GM12878 (cell line): ENCODE measurements at regions of chr2 and their contacts with region 1.

Region 1: DNA sequence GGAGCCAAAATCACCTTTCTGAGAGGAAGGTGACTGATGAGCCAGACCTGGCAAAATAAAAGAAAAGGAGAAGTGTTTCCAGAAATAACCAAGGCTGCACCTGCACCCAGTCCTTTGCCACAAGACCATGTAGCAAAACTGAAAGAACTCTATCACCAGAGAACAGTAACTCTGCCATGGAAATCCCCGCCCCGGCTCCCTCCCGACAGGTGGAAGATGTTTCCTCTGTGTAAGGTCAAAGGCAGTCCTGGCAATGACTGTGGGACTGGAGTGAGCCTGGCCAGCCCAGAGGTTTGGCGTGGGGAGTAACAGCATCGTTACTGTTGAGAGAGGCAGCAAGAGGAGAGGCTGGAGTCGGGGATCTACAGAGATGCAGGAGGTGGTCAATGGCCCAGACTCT is 42.3 kb downstream of the SPRED2 start:
- DNase-seq: peak; percentile 71
- ATAC-seq: peak; percentile 73
- H3K4me3 ChIP-seq: 0 out of 2 replicates have a peak overlapping the region, but pooled peaks have one; percentile 22
- H3K27ac ChIP-seq: peak overlapping the region; percentile 78
- H3K4me1 ChIP-seq: peaks cover 74% of the 10 kb centered on the region
- H3K27me3 ChIP-seq: no peaks in the 10 kb centered on the region
- CTCF ChIP-seq: no peak
- EP300 ChIP-seq: peak; percentile 62 to 85; a peak in 3 of 4 replicates
- POLR2A ChIP-seq: peak; percentile 56
- RAD21 ChIP-seq: no peak

Region 2: GRCh38 chr2:64932371-64933216 is 457.5 kb before region 1 on chr2:
- CTCF ChIA-PET with region 1: no interaction called
- POLR2A ChIA-PET with region 1: no interaction called
- RAD21 ChIA-PET with region 1: no interaction called
- SMC1A ChIA-PET with region 1: no interaction called
- in situ Hi-C with region 1: no loop called
- intact Hi-C with region 1: loop called (anchors 10 kb)
- DNase-seq: peak; percentile 98
- ATAC-seq: peak; percentile 81
- H3K4me3 ChIP-seq: peak overlapping the region; percentile 96
- H3K27ac ChIP-seq: peak overlapping the region; percentile 95
- H3K4me1 ChIP-seq: peaks cover 28% of the 10 kb centered on the region
- H3K27me3 ChIP-seq: no peaks in the 10 kb centered on the region
- CTCF ChIP-seq: no peak
- EP300 ChIP-seq: peak; percentile 62 to 83; a peak in 3 of 4 replicates
- POLR2A ChIP-seq: peak; percentile 84
- RAD21 ChIP-seq: 0 out of 2 replicates have a peak, but pooled peaks have one; percentile 1

Region 3: DNA sequence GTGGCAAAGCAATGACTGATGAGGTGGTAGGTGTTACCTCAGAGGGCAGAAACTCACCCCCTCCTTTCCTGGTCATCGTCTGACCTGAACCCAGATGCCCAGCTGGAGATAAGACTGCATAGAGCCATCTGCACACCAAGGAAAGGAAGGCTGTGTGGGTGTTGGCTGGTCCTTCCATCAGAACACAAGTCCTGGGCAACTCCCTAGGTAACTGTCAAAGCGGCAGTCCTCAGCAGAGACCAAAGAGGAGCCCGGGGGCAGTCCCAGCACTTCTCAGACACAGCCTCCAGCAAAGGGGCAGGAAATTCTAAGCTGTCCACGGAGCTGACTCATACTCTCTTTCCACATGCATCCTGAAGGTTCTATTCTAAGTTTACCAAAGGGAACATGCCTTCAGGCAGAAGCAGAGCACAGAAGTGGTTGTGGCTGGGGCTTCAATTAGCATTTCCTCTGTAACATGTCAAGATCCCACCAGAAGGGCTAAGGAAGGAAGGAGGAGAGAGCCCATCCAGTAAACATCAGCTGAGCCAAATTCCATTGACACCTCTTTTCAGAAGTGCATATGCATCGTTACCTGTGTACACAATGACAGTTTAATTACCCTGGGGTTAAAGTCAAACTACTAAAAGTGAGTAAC is 12.5 kb before region 1 on chr2:
- CTCF ChIA-PET with region 1: interaction called, 18 read pairs
- POLR2A ChIA-PET with region 1: interaction called, 8 read pairs
- RAD21 ChIA-PET with region 1: interaction called, 13 read pairs
- SMC1A ChIA-PET with region 1: interaction called, 80 read pairs
- in situ Hi-C with region 1: no loop called
- intact Hi-C with region 1: no loop called
- DNase-seq: no peak
- ATAC-seq: peak; percentile 64
- H3K4me3 ChIP-seq: no peak overlapping the region
- H3K27ac ChIP-seq: no peak overlapping the region
- H3K4me1 ChIP-seq: peaks cover 29% of the 10 kb centered on the region
- H3K27me3 ChIP-seq: no peaks in the 10 kb centered on the region
- CTCF ChIP-seq: no peak
- EP300 ChIP-seq: no peak
- POLR2A ChIP-seq: no peak
- RAD21 ChIP-seq: no peak

Region 4: DNA sequence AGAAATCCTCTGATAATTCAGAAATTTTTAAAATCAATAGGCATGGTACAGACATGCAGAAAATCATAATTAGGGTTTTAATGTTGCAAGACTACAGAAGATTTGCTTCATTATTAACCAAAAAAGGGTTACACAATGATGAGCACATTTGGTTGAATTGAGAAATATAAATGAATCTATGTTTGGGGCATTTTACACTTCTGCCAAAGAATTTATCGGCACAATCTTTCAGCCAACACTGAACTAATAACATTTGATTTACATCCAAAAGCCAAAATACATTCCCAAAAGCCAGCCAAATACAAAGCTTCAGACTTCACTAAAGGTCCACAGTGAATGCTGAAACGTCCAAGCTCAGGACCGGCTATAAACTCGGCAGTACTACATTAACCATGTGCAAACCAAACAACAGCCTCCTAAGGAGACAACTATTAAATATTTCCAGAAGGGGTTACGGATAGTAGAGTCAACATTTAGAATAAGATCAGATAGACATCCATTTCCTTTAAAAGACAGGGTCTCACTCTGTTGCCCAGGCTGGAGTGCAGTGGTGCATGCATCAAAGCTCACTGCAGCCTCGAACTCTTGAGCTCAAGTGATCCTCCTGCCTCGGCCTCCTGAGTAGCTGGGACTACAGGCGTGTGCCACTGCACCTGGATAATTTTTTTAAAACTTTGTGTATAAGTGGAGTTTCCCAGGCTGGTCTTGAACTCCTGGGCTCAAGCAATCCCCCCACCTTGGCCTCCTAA is 12.8 kb after region 1 on chr2:
- CTCF ChIA-PET with region 1: interaction called, 5 read pairs
- POLR2A ChIA-PET with region 1: interaction called, 10 read pairs
- RAD21 ChIA-PET with region 1: interaction called, 11 read pairs
- SMC1A ChIA-PET with region 1: interaction called, 41 read pairs
- in situ Hi-C with region 1: no loop called
- intact Hi-C with region 1: no loop called
- DNase-seq: no peak
- ATAC-seq: no peak
- H3K4me3 ChIP-seq: no peak overlapping the region
- H3K27ac ChIP-seq: no peak overlapping the region
- H3K4me1 ChIP-seq: peaks cover 22% of the 10 kb centered on the region
- H3K27me3 ChIP-seq: no peaks in the 10 kb centered on the region
- CTCF ChIP-seq: no peak
- EP300 ChIP-seq: no peak
- POLR2A ChIP-seq: no peak
- RAD21 ChIP-seq: no peak

Region 5: DNA sequence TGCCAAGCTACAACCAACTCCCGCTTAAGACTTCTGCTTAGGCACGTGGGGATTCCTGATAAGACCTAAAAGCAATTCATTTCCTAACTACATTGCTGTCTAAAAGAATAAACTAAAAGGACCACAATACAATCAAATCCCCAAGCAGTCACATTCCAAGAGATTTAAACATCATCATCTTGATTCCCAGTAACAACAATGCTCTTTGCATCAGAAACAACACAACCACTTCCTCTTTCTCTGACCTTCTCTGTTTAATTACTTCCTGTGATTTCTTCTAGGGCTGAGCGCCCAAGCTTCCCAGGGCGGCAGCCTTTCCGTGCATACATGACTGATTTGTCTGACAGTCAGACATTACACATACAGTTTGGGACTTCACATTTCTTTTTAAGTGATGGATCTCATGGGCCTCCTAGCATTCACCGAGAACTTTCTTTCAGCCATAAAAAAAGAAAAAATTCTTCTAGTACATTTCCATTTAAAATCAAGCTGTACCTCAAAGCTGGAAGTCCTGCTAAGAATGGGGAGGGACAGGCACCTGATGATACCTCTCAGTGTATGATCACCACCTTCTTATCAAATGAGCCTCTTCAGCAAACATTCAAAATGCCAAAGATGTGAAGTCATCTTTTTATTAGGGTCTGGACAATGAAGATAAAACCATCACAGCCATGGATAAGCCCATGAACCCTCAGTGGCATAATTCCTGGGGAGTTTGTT is 30.7 kb after region 1 on chr2:
- CTCF ChIA-PET with region 1: interaction called, 5 read pairs
- POLR2A ChIA-PET with region 1: interaction called, 5 read pairs
- RAD21 ChIA-PET with region 1: interaction called, 6 read pairs
- SMC1A ChIA-PET with region 1: interaction called, 27 read pairs
- in situ Hi-C with region 1: no loop called
- intact Hi-C with region 1: no loop called
- DNase-seq: no peak
- ATAC-seq: peak; percentile 85
- H3K4me3 ChIP-seq: peak overlapping the region; percentile 3; the same call in 1 of the 2 replicates
- H3K27ac ChIP-seq: peak overlapping the region; percentile 49
- H3K4me1 ChIP-seq: peaks cover 28% of the 10 kb centered on the region
- H3K27me3 ChIP-seq: no peaks in the 10 kb centered on the region
- CTCF ChIP-seq: no peak
- EP300 ChIP-seq: peak; percentile 19 to 32; a peak in 1 of 4 replicates
- POLR2A ChIP-seq: no peak
- RAD21 ChIP-seq: 0 out of 2 replicates have a peak, but pooled peaks have one; percentile 2

Region 6: GRCh38 chr2:65554765-65555591 is 164.8 kb after region 1 on chr2:
- CTCF ChIA-PET with region 1: no interaction called
- POLR2A ChIA-PET with region 1: interaction called, 5 read pairs
- RAD21 ChIA-PET with region 1: no interaction called
- SMC1A ChIA-PET with region 1: no interaction called
- in situ Hi-C with region 1: no loop called
- intact Hi-C with region 1: loop called (anchors 5 kb)
- DNase-seq: peak; percentile 42
- ATAC-seq: peak; percentile 83
- H3K4me3 ChIP-seq: no peak overlapping the region
- H3K27ac ChIP-seq: no peak overlapping the region
- H3K4me1 ChIP-seq: peaks cover 14% of the 10 kb centered on the region
- H3K27me3 ChIP-seq: no peaks in the 10 kb centered on the region; a peak in 1 of 4 replicates
- CTCF ChIP-seq: no peak
- EP300 ChIP-seq: no peak
- POLR2A ChIP-seq: no peak
- RAD21 ChIP-seq: no peak